ENCODE measurements at regions of chr15 and their contacts with region 1.

Region 1: GRCh38 chr15:28890711-28891495 is 5.1 kb downstream of the APBA2 start:
- DNase-seq: peak in 5 of 9 experiments; percentile 32 to 75 (median 53)
- ATAC-seq: peak; percentile 66
- H3K4me3 ChIP-seq: peak overlapping the region in 1 of 2 experiments; percentile 72
- H3K4me3 Mint-ChIP-seq: peak overlapping the region; percentile 91
- H3K27ac ChIP-seq: peak overlapping the region; percentile 67 to 69
- H3K27ac Mint-ChIP-seq: peak overlapping the region; percentile 99
- H3K4me1 ChIP-seq: peaks cover 75% of the 10 kb centered on the region
- H3K4me1 Mint-ChIP-seq: peaks cover 76% of the 10 kb centered on the region
- H3K27me3 ChIP-seq: no peaks in the 10 kb centered on the region
- H3K27me3 Mint-ChIP-seq: no peaks in the 10 kb centered on the region
- CTCF ChIP-seq: no peak

Region 2: GRCh38 chr15:27768732-27769475 is 1122.0 kb before region 1 on chr15:
- CTCF ChIA-PET with region 1: no interaction called
- POLR2A ChIA-PET with region 1: no interaction called
- intact Hi-C with region 1: no loop called
- DNase-seq: no peak
- ATAC-seq: no peak
- H3K4me3 ChIP-seq: no peak overlapping the region
- H3K4me3 Mint-ChIP-seq: no peak overlapping the region
- H3K27ac ChIP-seq: no peak overlapping the region
- H3K27ac Mint-ChIP-seq: no peak overlapping the region
- H3K4me1 ChIP-seq: no peaks in the 10 kb centered on the region
- H3K4me1 Mint-ChIP-seq: no peaks in the 10 kb centered on the region
- H3K27me3 ChIP-seq: no peaks in the 10 kb centered on the region
- H3K27me3 Mint-ChIP-seq: no peaks in the 10 kb centered on the region
- CTCF ChIP-seq: no peak

Region 3: GRCh38 chr15:28861031-28861534 is 29.8 kb before region 1 on chr15:
- CTCF ChIA-PET with region 1: no interaction called
- POLR2A ChIA-PET with region 1: no interaction called
- intact Hi-C with region 1: no loop called
- DNase-seq: no peak
- ATAC-seq: no peak
- H3K4me3 ChIP-seq: no peak overlapping the region
- H3K4me3 Mint-ChIP-seq: no peak overlapping the region
- H3K27ac ChIP-seq: no peak overlapping the region
- H3K27ac Mint-ChIP-seq: no peak overlapping the region
- H3K4me1 ChIP-seq: no peaks in the 10 kb centered on the region
- H3K4me1 Mint-ChIP-seq: no peaks in the 10 kb centered on the region
- H3K27me3 ChIP-seq: no peaks in the 10 kb centered on the region
- H3K27me3 Mint-ChIP-seq: no peaks in the 10 kb centered on the region
- CTCF ChIP-seq: no peak

Region 4: DNA sequence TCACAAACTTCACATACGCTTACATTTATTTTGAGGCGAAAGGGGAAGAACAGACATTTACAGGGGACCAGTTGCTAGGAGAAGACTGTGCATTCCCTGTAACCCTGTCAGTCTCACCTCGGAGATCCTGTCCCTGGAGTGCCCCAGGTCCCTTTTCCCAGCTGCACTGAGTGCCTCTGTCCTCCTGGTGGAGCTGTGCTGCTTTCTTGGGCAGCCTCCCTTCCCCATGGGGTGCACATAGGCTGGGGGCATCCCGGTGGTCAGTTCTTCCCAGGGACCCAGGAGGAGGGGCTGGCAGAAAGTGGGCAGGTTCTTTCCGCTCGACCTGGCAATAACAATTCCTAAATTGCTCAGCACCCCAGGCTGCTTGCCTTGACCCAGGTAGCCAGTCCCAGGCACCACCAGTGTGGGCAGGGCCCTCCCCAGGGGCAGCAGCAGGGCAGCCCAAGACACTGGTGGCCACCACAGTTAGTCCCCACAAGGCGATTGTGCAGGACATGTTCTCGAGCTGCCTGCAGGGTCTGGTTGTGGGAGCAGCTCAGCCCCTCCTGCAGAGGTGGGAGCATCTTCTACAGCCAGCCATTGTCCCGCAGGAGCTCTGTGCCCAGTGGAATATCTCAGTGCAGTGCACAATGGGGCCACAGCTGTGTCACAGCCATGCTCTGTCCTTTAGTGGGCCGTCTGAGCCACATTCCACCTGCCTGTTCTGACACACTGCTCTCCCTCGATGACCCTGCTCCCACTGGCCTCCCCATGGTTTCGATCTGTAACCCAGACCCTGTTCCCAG is 31.2 kb after region 1 on chr15:
- CTCF ChIA-PET with region 1: interaction called, 4 read pairs
- POLR2A ChIA-PET with region 1: interaction called, 10 read pairs
- intact Hi-C with region 1: loop called (anchors 2 to 5 kb)
- DNase-seq: peak in 1 of 9 experiments; percentile 30
- ATAC-seq: no peak
- H3K4me3 ChIP-seq: peak overlapping the region in 1 of 2 experiments; percentile 4
- H3K4me3 Mint-ChIP-seq: peak overlapping the region; percentile 79
- H3K27ac ChIP-seq: peak overlapping the region in 1 of 2 experiments; percentile 60
- H3K27ac Mint-ChIP-seq: peak overlapping the region; percentile 86
- H3K4me1 ChIP-seq: peaks cover 72% of the 10 kb centered on the region
- H3K4me1 Mint-ChIP-seq: peaks cover 81% of the 10 kb centered on the region
- H3K27me3 ChIP-seq: no peaks in the 10 kb centered on the region
- H3K27me3 Mint-ChIP-seq: no peaks in the 10 kb centered on the region
- CTCF ChIP-seq: no peak

Region 5: GRCh38 chr15:28942046-28942445 is 51.1 kb after region 1 on chr15:
- CTCF ChIA-PET with region 1: no interaction called
- POLR2A ChIA-PET with region 1: interaction called, 3 read pairs
- intact Hi-C with region 1: loop called (anchors 2 to 5 kb)
- DNase-seq: peak in 8 of 9 experiments; percentile 34 to 84 (median 66)
- ATAC-seq: peak; percentile 74
- H3K4me3 ChIP-seq: peak overlapping the region; percentile 10 to 28
- H3K4me3 Mint-ChIP-seq: peak overlapping the region; percentile 59
- H3K27ac ChIP-seq: peak overlapping the region; percentile 4 to 54
- H3K27ac Mint-ChIP-seq: peak overlapping the region; percentile 92
- H3K4me1 ChIP-seq: peaks cover 91% of the 10 kb centered on the region
- H3K4me1 Mint-ChIP-seq: peaks cover 87% of the 10 kb centered on the region
- H3K27me3 ChIP-seq: no peaks in the 10 kb centered on the region
- H3K27me3 Mint-ChIP-seq: no peaks in the 10 kb centered on the region
- CTCF ChIP-seq: no peak

Region 6: GRCh38 chr15:28948036-28948435 is 57.1 kb after region 1 on chr15:
- CTCF ChIA-PET with region 1: no interaction called
- POLR2A ChIA-PET with region 1: interaction called, 3 read pairs
- intact Hi-C with region 1: loop called (anchors 2 kb)
- DNase-seq: peak in 1 of 9 experiments; percentile 43
- ATAC-seq: no peak
- H3K4me3 ChIP-seq: peak overlapping the region; percentile 18 to 40
- H3K4me3 Mint-ChIP-seq: peak overlapping the region; percentile 84
- H3K27ac ChIP-seq: peak overlapping the region; percentile 59 to 67
- H3K27ac Mint-ChIP-seq: peak overlapping the region; percentile 98
- H3K4me1 ChIP-seq: peaks cover 86% of the 10 kb centered on the region
- H3K4me1 Mint-ChIP-seq: peaks cover 81% of the 10 kb centered on the region
- H3K27me3 ChIP-seq: no peaks in the 10 kb centered on the region
- H3K27me3 Mint-ChIP-seq: no peaks in the 10 kb centered on the region
- CTCF ChIP-seq: no peak